HEK293 (cell line): ENCODE measurements at regions of chr4 and their contacts with region 1.

Region 1: GRCh38 chr4:23153076-23153475 is 460.3 kb downstream of the GBA3 start:
- H3K4me3 ChIP-seq: no peak overlapping the region
- H3K27ac ChIP-seq: no peak overlapping the region
- H3K4me1 ChIP-seq: no peaks in the 10 kb centered on the region
- CTCF ChIP-seq: no peak

Region 2: GRCh38 chr4:23135792-23136645 is 17.1 kb before region 1 on chr4:
- CTCF ChIA-PET with region 1: interaction called, 12 read pairs
- POLR2A ChIA-PET with region 1: no interaction called
- H3K4me3 ChIP-seq: no peak overlapping the region
- H3K27ac ChIP-seq: no peak overlapping the region
- H3K4me1 ChIP-seq: no peaks in the 10 kb centered on the region
- CTCF ChIP-seq: no peak